Heart right ventricle (tissue), 16 donors: ENCODE measurements at regions of chr12 and their contacts with region 1.

Region 1: DNA sequence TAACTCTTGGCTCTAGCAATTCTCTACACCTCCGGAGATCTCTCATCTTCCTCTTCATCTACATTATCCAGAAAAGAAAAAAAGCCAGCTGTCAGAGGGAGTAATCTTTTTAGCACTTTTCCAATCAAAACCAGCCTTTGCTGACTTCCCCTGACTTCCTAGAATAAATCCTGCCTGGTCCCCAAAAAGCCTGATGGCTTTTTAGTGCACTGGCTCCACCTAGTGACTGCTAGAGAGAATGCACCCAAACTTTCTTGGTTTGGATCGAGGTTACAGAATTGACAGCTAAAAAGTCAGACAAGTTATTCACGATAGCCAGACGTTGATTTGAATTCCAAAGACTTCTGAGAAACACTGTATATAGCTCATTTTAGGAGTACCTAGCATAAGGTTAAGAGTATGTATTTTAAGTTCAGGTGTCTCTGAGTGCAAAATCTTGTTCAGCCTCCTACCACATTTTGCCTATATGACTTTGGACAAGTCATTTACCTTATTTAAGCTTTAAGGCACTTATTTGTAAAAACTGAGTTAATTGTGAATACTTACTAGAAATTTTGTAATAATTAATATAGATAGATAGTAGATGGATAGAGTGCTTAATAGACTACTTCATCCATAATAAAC is 185.7 kb upstream of the GRIN2B start:
- DNase-seq: peak in 1 of 2 donors; percentile 32
- ATAC-seq: no peak
- H3K4me3 ChIP-seq: no peak overlapping the region
- H3K27ac ChIP-seq: no peak overlapping the region
- H3K4me1 ChIP-seq: no peaks in the 10 kb centered on the region
- H3K27me3 ChIP-seq: peaks cover 0 to 5% (median 0%) of the 10 kb centered on the region in 7 donors
- CTCF ChIP-seq: peak; percentile 86 to 96 (median 94)

Region 2: GRCh38 chr12:13278249-13278787 is 888.8 kb before region 1 on chr12:
- intact Hi-C with region 1: loop called in 4 of 10 experiments (anchors 5 to 10 kb)
- DNase-seq: peak; percentile 58 to 77
- ATAC-seq: peak; percentile 91 to 96 (median 95)
- H3K4me3 ChIP-seq: peak overlapping the region in 2 of 10 donors; percentile 10 to 16
- H3K27ac ChIP-seq: peak overlapping the region in 1 of 10 donors; percentile 35
- H3K4me1 ChIP-seq: peaks cover 0 to 13% (median 10%) of the 10 kb centered on the region in 9 donors
- H3K27me3 ChIP-seq: peaks cover 0 to 49% (median 20%) of the 10 kb centered on the region in 7 donors
- CTCF ChIP-seq: peak; percentile 91 to 99 (median 98)

Region 3: GRCh38 chr12:13347241-13348043 is 819.7 kb before region 1 on chr12:
- intact Hi-C with region 1: no loop called
- DNase-seq: no peak
- ATAC-seq: peak in 3 of 8 donors; percentile 22 to 83 (median 55)
- H3K4me3 ChIP-seq: no peak overlapping the region
- H3K27ac ChIP-seq: peak overlapping the region in 1 of 10 donors; percentile 8
- H3K4me1 ChIP-seq: peaks cover 0 to 3% (median 0%) of the 10 kb centered on the region in 9 donors
- H3K27me3 ChIP-seq: peaks cover 0 to 12% (median 5%) of the 10 kb centered on the region in 7 donors
- CTCF ChIP-seq: no peak

Region 4: GRCh38 chr12:13734584-13735152 is 432.4 kb before region 1 on chr12:
- intact Hi-C with region 1: loop called in 4 of 10 experiments (anchors 5 to 10 kb)
- DNase-seq: no peak
- ATAC-seq: no peak
- H3K4me3 ChIP-seq: no peak overlapping the region
- H3K27ac ChIP-seq: no peak overlapping the region
- H3K4me1 ChIP-seq: no peaks in the 10 kb centered on the region
- H3K27me3 ChIP-seq: peaks cover 0 to 4% (median 0%) of the 10 kb centered on the region in 7 donors
- CTCF ChIP-seq: no peak

Region 5: DNA sequence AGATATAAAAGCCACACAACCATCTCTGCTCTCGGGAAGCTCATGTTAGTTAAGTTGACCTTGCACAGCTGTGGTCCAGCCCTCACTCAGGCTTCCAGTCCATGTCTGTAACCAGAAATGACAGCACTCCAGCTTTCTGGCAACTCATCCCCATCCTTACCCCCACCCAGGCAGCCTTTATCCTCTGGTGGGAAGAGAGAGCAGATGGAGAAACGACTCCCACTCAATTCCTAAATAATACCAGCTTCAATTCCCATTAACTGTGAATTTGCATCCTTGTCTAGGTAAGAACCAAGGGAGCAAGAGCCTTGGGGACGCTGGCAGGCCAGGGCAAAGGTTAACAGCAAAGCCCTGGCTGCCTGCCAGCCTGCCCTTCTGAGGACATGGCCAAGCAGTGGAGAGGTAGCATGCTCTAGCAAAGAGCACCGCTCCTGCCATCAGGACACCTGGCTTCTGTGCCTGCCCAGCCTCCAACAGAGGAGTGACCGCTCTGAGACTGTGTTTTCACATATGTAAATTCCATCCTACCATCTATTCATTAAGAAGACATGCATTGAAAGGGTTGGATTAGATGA is 421.9 kb before region 1 on chr12:
- intact Hi-C with region 1: loop called in 4 of 10 experiments (anchors 2 to 10 kb)
- DNase-seq: peak in 1 of 2 donors; percentile 9
- ATAC-seq: no peak
- H3K4me3 ChIP-seq: no peak overlapping the region
- H3K27ac ChIP-seq: no peak overlapping the region
- H3K4me1 ChIP-seq: no peaks in the 10 kb centered on the region
- H3K27me3 ChIP-seq: peaks cover 0 to 42% (median 20%) of the 10 kb centered on the region in 7 donors
- CTCF ChIP-seq: no peak